ENCODE measurements at regions of chr15 and their contacts with region 1.

Region 1: GRCh38 chr15:34209421-34210282 is at the start of gene KATNBL1:
- DNase-seq: peak; percentile 95 to 97 (median 96)
- ATAC-seq: peak; percentile 98
- H3K4me3 ChIP-seq: peak within 1 kb of the TSS; percentile 81
- H3K27ac ChIP-seq: peak within 1 kb of the TSS; percentile 85
- H3K4me1 ChIP-seq: no peaks in the 10 kb centered on the region; a peak in 1 of 5 replicates
- H3K27me3 ChIP-seq: no peaks in the 10 kb centered on the region
- CTCF ChIP-seq: peak; percentile 90 to 97 (median 91)
- EP300 ChIP-seq: no peak
- POLR2A ChIP-seq: peak; percentile 92
- RAD21 ChIP-seq: peak; percentile 84 to 86
- polyA plus RNA-seq, gene KATNBL1: 6.6 to 10.6 TPM

Region 2: DNA sequence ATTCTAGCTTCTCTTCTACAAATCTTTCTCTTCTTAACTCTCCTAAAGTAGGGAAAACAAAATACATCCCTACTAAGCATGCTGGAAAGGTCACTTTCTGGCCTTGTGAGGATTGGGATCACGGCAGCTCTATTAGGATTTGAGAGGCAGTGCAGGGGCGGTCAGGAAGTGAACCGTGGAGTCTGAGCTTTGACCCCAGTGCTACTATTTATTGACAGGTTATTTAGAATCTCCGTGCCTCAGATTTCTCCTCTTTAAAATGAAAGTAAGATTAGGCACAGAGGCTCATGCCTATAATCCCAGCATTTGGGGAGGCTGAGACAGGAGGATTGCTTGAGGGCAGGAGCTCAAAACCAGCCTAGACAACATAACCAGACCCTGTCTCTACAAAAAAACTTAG is 283.4 kb before region 1 on chr15:
- CTCF ChIA-PET with region 1: no interaction called
- POLR2A ChIA-PET with region 1: no interaction called
- in situ Hi-C with region 1: no loop called
- intact Hi-C with region 1: no loop called
- DNase-seq: no peak
- ATAC-seq: no peak
- H3K4me3 ChIP-seq: no peak overlapping the region
- H3K27ac ChIP-seq: no peak overlapping the region
- H3K4me1 ChIP-seq: no peaks in the 10 kb centered on the region
- H3K27me3 ChIP-seq: no peaks in the 10 kb centered on the region; a peak in 2 of 5 replicates
- CTCF ChIP-seq: no peak
- EP300 ChIP-seq: no peak
- POLR2A ChIP-seq: no peak
- RAD21 ChIP-seq: no peak

Region 3: DNA sequence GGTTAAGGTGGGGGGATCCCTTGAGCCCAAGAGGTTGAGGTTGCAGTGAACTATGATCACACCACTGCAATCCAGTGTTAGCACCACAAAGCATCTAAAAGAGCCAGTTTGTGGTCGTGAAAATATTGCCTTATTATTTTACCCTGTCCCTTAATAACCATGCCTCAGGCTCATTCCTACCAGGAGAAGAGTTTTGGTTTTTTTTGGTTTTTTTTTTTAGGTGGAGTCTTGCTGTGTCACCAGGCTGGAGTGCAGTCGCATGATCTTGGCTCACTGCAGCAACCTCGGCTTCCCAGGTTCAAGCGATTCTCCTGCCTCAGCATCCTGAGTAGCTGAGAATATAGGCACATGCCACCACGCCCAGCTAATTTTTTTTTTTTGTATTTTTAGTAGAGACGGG is 152.7 kb before region 1 on chr15:
- CTCF ChIA-PET with region 1: interaction called, 20 read pairs
- POLR2A ChIA-PET with region 1: interaction called, 4 read pairs
- in situ Hi-C with region 1: no loop called
- intact Hi-C with region 1: loop called (anchors 1 kb)
- DNase-seq: no peak
- ATAC-seq: no peak
- H3K4me3 ChIP-seq: no peak overlapping the region
- H3K27ac ChIP-seq: no peak overlapping the region
- H3K4me1 ChIP-seq: no peaks in the 10 kb centered on the region
- H3K27me3 ChIP-seq: peaks cover 2 to 4% of the 10 kb centered on the region in 2 experiments; a peak in 1 of 5 replicates
- CTCF ChIP-seq: no peak
- EP300 ChIP-seq: no peak
- POLR2A ChIP-seq: no peak
- RAD21 ChIP-seq: no peak

Region 4: GRCh38 chr15:34101366-34102175 is 108.1 kb before region 1 on chr15 and contains the starts of genes EMC7 and PGBD4:
- CTCF ChIA-PET with region 1: no interaction called
- POLR2A ChIA-PET with region 1: interaction called, 7 read pairs
- in situ Hi-C with region 1: loop called (anchors 5 kb)
- intact Hi-C with region 1: no loop called
- DNase-seq: peak; percentile 92 to 99 (median 93)
- ATAC-seq: peak; percentile 99
- H3K4me3 ChIP-seq: peak within 1 kb of the TSS; percentile 92
- H3K27ac ChIP-seq: peak within 1 kb of the TSS; percentile 89
- H3K4me1 ChIP-seq: peaks cover 0 to 3% of the 10 kb centered on the region in 2 experiments; a peak in 1 of 5 replicates
- H3K27me3 ChIP-seq: no peaks in the 10 kb centered on the region
- CTCF ChIP-seq: no peak
- EP300 ChIP-seq: 0 out of 2 replicates have a peak, but pooled peaks have one; percentile 19
- POLR2A ChIP-seq: peak; percentile 98
- RAD21 ChIP-seq: no peak
- polyA plus RNA-seq, gene EMC7: 25.8 to 48.3 TPM
- polyA plus RNA-seq, gene PGBD4: 2.3 to 2.5 TPM

Region 5: DNA sequence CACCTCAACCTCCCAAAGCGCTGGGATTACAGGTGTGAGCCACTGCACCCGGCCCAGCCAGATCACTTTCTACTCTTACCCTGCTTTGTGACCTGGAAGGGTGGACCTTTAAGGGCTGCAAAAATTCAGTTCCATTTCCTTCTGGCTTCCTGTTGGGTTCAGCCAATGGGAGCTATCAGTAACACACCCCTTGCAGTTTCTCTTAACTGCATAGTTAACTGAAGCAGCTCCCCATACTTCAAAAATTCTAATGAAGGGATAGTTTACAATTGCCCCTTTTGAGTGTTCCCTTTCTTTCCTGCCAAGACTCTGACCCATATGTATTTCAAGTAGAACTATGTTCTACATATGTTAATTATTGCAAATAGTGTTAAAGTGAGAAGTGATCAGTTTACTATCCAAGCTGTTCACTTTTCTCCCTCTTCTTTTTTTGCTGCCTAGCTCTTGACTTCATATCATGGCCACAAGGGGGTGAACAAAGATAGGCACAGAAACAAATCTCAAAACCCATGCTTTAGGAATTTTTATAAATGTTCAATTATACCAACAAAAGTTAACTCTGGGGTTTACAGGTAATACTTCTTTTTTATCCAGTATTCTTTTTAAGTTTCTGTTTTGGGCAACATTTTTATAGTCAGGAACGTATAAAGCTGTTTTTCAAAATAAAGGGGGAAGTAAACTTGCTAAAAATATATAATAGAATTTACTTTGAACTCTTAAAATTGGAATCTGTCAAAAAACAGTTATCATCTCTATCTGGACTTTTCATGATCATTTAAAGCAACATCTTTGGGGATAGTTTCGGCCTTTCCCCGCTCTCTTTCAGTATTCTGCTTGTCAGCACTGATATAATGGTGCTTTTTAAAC is 99.6 kb before region 1 on chr15:
- CTCF ChIA-PET with region 1: interaction called, 18 read pairs
- POLR2A ChIA-PET with region 1: interaction called, 6 read pairs
- in situ Hi-C with region 1: no loop called
- intact Hi-C with region 1: loop called (anchors 1 kb)
- DNase-seq: peak; percentile 28 to 60 (median 36)
- ATAC-seq: peak; percentile 83
- H3K4me3 ChIP-seq: no peak overlapping the region
- H3K27ac ChIP-seq: no peak overlapping the region
- H3K4me1 ChIP-seq: no peaks in the 10 kb centered on the region
- H3K27me3 ChIP-seq: no peaks in the 10 kb centered on the region
- CTCF ChIP-seq: peak; percentile 65 to 84 (median 73); a peak in 5 of 6 replicates
- EP300 ChIP-seq: no peak
- POLR2A ChIP-seq: no peak
- RAD21 ChIP-seq: peak; percentile 68 to 91

Region 6: DNA sequence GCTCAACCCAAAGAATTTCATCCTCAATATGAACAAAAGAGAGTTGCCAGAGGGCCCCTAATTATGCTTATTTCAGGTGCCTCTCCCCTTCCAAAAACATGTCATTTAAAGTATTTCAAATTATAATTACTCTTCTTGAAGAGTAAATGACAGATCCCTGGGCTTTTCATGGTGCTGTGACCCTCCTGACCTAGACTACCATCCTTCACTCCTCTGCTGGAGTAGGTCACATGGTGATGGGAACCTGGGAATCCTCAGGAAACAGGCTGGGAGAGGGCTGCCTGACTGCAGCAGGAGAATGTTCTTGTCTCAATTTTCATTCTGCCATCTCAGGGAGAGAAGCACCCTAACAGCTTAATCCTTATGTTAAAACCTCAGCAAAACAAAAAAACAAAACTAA is 83.2 kb before region 1 on chr15:
- CTCF ChIA-PET with region 1: no interaction called
- POLR2A ChIA-PET with region 1: no interaction called
- in situ Hi-C with region 1: no loop called
- intact Hi-C with region 1: loop called (anchors 5 kb)
- DNase-seq: no peak
- ATAC-seq: no peak
- H3K4me3 ChIP-seq: no peak overlapping the region
- H3K27ac ChIP-seq: no peak overlapping the region
- H3K4me1 ChIP-seq: no peaks in the 10 kb centered on the region
- H3K27me3 ChIP-seq: no peaks in the 10 kb centered on the region
- CTCF ChIP-seq: no peak
- EP300 ChIP-seq: no peak
- POLR2A ChIP-seq: no peak
- RAD21 ChIP-seq: no peak

Region 7: DNA sequence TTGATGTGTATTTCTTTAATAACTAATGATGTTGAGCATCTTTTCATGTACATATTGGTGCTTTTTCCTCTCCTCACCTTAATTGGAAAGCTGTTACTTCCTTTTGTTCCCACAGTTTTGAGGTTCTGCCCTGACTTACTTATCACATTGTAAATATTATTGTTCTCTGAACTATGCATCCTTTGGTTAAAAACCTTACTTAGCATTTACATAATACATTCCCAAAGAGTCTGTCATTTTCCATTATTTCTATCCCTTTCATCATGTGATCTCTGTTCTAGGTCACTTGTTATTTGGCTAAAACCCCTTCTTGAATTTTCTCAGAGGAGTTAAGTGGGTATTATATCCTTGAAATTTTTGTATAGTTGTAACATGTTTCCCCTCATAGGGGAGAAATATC is 95.0 kb after region 1 on chr15:
- CTCF ChIA-PET with region 1: no interaction called
- POLR2A ChIA-PET with region 1: no interaction called
- in situ Hi-C with region 1: no loop called
- intact Hi-C with region 1: no loop called
- DNase-seq: no peak
- ATAC-seq: no peak
- H3K4me3 ChIP-seq: no peak overlapping the region
- H3K27ac ChIP-seq: no peak overlapping the region
- H3K4me1 ChIP-seq: no peaks in the 10 kb centered on the region
- H3K27me3 ChIP-seq: no peaks in the 10 kb centered on the region
- CTCF ChIP-seq: no peak
- EP300 ChIP-seq: no peak
- POLR2A ChIP-seq: no peak
- RAD21 ChIP-seq: no peak